CD4-positive, alpha-beta T cell (primary cell): ENCODE measurements at regions of chr1 and their contacts with region 1.

Region 1: DNA sequence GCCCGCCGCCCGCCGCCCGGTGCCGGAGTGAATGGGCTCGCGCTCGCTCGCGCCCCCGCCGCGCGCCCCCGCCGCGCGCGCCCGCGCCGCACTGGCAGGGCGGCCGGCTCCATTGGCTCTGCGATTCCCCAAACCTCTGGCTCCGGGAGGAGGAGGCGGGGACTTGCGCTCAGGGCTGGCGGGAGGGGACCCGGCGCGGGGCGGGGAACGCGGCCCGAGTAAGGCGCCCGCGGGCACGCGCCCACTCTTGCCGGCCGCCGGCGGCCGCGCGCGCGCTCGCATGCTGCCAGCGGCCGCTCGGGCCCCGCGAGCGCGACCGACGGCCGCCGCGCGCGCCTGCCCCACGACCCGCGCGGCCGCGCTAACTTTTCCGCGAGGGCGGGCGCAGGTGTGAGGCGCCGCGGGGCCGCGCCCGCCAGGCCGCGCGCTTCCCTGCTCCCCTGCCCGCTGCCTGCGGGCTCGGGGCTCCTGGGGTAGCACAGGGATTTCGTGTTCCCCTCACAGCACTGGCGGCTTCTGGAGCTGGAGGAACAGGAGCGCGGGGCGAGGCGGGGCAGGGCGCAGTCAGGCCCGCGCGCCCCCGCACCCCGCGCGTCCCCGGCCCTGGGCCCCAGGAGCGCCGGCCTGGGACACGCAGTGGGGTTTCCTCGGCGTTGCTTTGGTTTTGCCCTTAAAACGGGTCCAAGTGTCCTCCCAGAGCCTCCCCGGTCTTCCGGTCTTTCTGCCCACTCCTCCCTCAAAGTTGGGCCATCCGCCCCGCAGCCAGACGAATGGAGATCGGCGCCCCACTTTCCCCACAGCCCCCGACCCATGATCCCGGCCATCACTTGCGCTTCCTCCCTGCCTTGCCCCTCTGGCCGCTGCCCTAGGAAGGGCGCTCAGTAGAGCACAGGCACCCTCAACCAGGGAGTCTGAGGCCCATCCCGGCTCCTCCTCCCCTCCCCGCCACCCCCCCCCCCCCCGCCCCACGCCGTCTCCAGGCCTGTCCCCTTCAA is 101.5 kb downstream of the CASZ1 start:
- DNase-seq: peak in 13 of 14 experiments; percentile 41 to 93 (median 72)
- ATAC-seq: peak; percentile 70
- H3K4me3 ChIP-seq: peak overlapping the region; percentile 35
- H3K4me3 Mint-ChIP-seq: peak overlapping the region; percentile 95
- H3K27ac ChIP-seq: no peak overlapping the region
- H3K27ac Mint-ChIP-seq: peak overlapping the region; percentile 79
- H3K4me1 ChIP-seq: peaks cover 27% of the 10 kb centered on the region
- H3K4me1 Mint-ChIP-seq: peaks cover 19% of the 10 kb centered on the region
- H3K27me3 ChIP-seq: no peaks in the 10 kb centered on the region
- H3K27me3 Mint-ChIP-seq: no peaks in the 10 kb centered on the region
- CTCF ChIP-seq: no peak

Region 2: DNA sequence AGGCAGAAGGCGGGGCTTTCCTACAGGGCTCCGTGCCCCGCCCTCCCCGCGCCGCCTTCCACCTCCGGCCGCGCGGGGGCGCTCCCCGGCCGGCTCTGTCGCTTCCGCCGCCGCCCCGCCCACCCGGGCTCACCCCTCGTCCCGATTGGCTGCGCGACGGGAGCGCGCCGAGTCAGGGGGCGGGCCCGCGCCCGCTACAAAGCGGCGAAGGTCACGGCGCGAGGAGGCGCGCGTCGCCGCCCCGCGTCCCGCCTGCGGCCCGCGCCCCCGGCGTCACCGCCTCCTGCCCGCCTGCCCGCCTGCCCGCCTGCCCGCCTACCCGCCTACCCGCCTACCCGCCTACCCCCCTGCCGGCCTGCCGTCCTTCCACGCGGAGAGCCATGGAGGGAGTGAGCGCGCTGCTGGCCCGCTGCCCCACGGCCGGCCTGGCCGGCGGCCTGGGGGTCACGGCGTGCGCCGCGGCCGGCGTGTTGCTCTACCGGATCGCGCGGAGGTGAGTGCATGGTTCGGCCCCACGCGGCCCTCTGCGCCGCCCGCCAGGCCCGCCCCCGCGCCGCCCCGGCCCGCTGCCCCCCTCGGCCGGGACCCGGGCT is 1106.3 kb before region 1 on chr1 and contains the start of gene TMEM201:
- CTCF ChIA-PET with region 1: no interaction called
- POLR2A ChIA-PET with region 1: no interaction called
- intact Hi-C with region 1: loop called in 1 of 2 experiments (anchors 2 kb)
- DNase-seq: peak; percentile 87 to 98 (median 94)
- ATAC-seq: peak; percentile 91
- H3K4me3 ChIP-seq: peak within 1 kb of the TSS; percentile 66
- H3K4me3 Mint-ChIP-seq: peak within 1 kb of the TSS; percentile 92
- H3K27ac ChIP-seq: no peak within 1 kb of the TSS
- H3K27ac Mint-ChIP-seq: peak within 1 kb of the TSS; percentile 65
- H3K4me1 ChIP-seq: peaks cover 38% of the 10 kb centered on the region
- H3K4me1 Mint-ChIP-seq: peaks cover 33% of the 10 kb centered on the region
- H3K27me3 ChIP-seq: no peaks in the 10 kb centered on the region
- H3K27me3 Mint-ChIP-seq: no peaks in the 10 kb centered on the region
- CTCF ChIP-seq: peak; percentile 6
- total RNA-seq, gene TMEM201: 9.1 to 9.2 TPM

Region 3: DNA sequence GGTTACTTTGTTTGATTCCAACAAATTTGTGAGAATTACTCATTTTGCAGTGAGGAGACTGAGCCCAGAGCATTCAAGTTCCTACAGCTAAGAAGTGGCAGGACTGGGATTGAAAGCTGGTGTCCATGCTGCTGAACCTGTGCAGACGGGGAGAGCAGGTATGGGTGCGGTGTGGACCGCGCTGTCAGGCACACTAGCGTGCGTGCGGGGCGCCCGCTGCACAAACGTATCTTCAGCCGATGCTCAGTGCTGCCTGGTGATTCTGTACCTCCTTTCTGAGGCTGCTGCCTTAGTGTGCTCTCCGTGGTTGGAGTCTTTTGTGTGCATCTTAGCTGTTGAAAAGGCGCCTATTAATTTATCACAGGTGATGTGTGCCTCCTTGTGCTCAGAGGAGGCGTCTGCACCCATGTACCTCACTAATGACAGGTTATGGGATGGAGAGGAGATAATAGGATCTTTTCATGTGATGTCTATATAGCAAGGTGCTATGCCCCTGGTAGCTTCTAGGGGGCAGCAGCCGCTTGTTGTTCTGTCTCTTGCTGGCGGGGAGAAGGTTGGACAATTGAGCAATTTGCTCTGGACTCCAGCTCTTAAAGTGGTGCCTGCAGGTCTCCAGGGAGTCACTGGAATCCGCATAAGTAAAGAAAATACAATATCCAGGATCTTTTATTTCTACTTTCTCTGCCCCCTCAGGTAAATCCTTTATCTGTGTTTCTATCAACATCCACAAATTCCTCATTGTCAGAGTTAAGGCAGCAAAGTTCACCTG is 187.6 kb before region 1 on chr1:
- CTCF ChIA-PET with region 1: interaction called, 4 read pairs
- POLR2A ChIA-PET with region 1: interaction called, 3 read pairs
- intact Hi-C with region 1: loop called in 1 of 2 experiments (anchors 5 kb)
- DNase-seq: peak; percentile 37 to 76 (median 50)
- ATAC-seq: peak; percentile 76
- H3K4me3 ChIP-seq: no peak overlapping the region
- H3K4me3 Mint-ChIP-seq: peak overlapping the region; percentile 0
- H3K27ac ChIP-seq: no peak overlapping the region
- H3K27ac Mint-ChIP-seq: peak overlapping the region; percentile 64
- H3K4me1 ChIP-seq: peaks cover 43% of the 10 kb centered on the region
- H3K4me1 Mint-ChIP-seq: peaks cover 58% of the 10 kb centered on the region
- H3K27me3 ChIP-seq: no peaks in the 10 kb centered on the region
- H3K27me3 Mint-ChIP-seq: no peaks in the 10 kb centered on the region
- CTCF ChIP-seq: peak; percentile 79

Region 4: GRCh38 chr1:10803971-10804820 is 109.3 kb after region 1 on chr1:
- CTCF ChIA-PET with region 1: no interaction called
- POLR2A ChIA-PET with region 1: no interaction called
- intact Hi-C with region 1: no loop called
- DNase-seq: peak in 2 of 14 experiments; percentile 5 to 12
- ATAC-seq: no peak
- H3K4me3 ChIP-seq: no peak overlapping the region
- H3K4me3 Mint-ChIP-seq: no peak overlapping the region
- H3K27ac ChIP-seq: no peak overlapping the region
- H3K27ac Mint-ChIP-seq: no peak overlapping the region
- H3K4me1 ChIP-seq: peaks cover 11% of the 10 kb centered on the region
- H3K4me1 Mint-ChIP-seq: no peaks in the 10 kb centered on the region
- H3K27me3 ChIP-seq: peaks cover 6 to 15% of the 10 kb centered on the region in 2 experiments
- H3K27me3 Mint-ChIP-seq: peaks cover 79% of the 10 kb centered on the region
- CTCF ChIP-seq: no peak

Region 5: DNA sequence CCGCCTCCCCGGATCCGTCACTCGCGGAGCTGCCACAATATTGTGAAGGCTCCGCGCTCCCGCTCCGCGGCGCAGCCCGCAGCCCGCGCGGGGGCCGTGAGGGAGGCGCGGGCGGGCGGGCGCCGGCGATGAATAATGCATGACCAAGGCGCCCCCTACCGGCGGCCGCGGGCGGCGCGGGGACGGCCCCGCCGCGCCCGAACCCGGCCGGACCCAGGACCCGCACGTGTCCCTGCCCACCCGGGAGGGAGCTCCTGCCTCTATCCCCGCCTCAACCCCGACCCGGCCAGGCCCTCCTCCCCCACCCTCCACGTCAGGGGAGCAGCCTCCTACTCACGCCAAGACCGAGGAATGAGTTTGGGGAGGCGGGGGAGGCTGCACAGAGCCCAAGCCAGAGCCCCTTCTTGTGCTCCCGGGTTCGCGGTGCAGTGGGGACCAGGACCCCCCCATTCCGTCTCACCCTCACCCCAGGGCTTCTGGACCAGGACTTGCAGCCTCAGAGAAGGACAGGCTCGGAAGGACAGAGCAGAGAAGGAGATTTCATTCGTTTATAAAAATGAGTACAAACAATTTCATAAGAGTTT is 172.3 kb after region 1 on chr1:
- CTCF ChIA-PET with region 1: no interaction called
- POLR2A ChIA-PET with region 1: no interaction called
- intact Hi-C with region 1: loop called (anchors 2 kb)
- DNase-seq: peak; percentile 39 to 82 (median 59)
- ATAC-seq: peak; percentile 85
- H3K4me3 ChIP-seq: peak overlapping the region; percentile 29
- H3K4me3 Mint-ChIP-seq: peak overlapping the region; percentile 6
- H3K27ac ChIP-seq: no peak overlapping the region
- H3K27ac Mint-ChIP-seq: no peak overlapping the region
- H3K4me1 ChIP-seq: peaks cover 16% of the 10 kb centered on the region
- H3K4me1 Mint-ChIP-seq: peaks cover 25% of the 10 kb centered on the region
- H3K27me3 ChIP-seq: peaks cover 40 to 41% of the 10 kb centered on the region in 2 experiments
- H3K27me3 Mint-ChIP-seq: peaks cover 71% of the 10 kb centered on the region
- CTCF ChIP-seq: peak; percentile 48

Region 6: GRCh38 chr1:10909697-10910671 is 215.1 kb after region 1 on chr1:
- CTCF ChIA-PET with region 1: no interaction called
- POLR2A ChIA-PET with region 1: no interaction called
- intact Hi-C with region 1: loop called in 1 of 2 experiments (anchors 2 kb)
- DNase-seq: peak; percentile 63 to 81 (median 73)
- ATAC-seq: peak; percentile 91
- H3K4me3 ChIP-seq: no peak overlapping the region
- H3K4me3 Mint-ChIP-seq: no peak overlapping the region
- H3K27ac ChIP-seq: no peak overlapping the region
- H3K27ac Mint-ChIP-seq: no peak overlapping the region
- H3K4me1 ChIP-seq: peaks cover 24% of the 10 kb centered on the region
- H3K4me1 Mint-ChIP-seq: peaks cover 19% of the 10 kb centered on the region
- H3K27me3 ChIP-seq: no peaks in the 10 kb centered on the region
- H3K27me3 Mint-ChIP-seq: peaks cover 5% of the 10 kb centered on the region
- CTCF ChIP-seq: peak; percentile 71

Region 7: GRCh38 chr1:10941891-10942541 is 247.1 kb after region 1 on chr1:
- CTCF ChIA-PET with region 1: interaction called, 3 read pairs
- POLR2A ChIA-PET with region 1: no interaction called
- intact Hi-C with region 1: loop called (anchors 2 to 5 kb)
- DNase-seq: peak; percentile 38 to 78 (median 56)
- ATAC-seq: peak; percentile 71
- H3K4me3 ChIP-seq: no peak overlapping the region
- H3K4me3 Mint-ChIP-seq: peak overlapping the region; percentile 20
- H3K27ac ChIP-seq: no peak overlapping the region
- H3K27ac Mint-ChIP-seq: no peak overlapping the region
- H3K4me1 ChIP-seq: peaks cover 42% of the 10 kb centered on the region
- H3K4me1 Mint-ChIP-seq: peaks cover 34% of the 10 kb centered on the region
- H3K27me3 ChIP-seq: peaks cover 8 to 14% of the 10 kb centered on the region in 2 experiments
- H3K27me3 Mint-ChIP-seq: peaks cover 53% of the 10 kb centered on the region
- CTCF ChIP-seq: peak; percentile 91

Region 8: GRCh38 chr1:11012250-11013171 is 317.6 kb after region 1 on chr1 and contains the start of gene TARDBP:
- CTCF ChIA-PET with region 1: no interaction called
- POLR2A ChIA-PET with region 1: no interaction called
- intact Hi-C with region 1: loop called in 1 of 2 experiments (anchors 5 kb)
- DNase-seq: peak; percentile 80 to 95 (median 88)
- ATAC-seq: peak; percentile 85
- H3K4me3 ChIP-seq: peak within 1 kb of the TSS; percentile 85
- H3K4me3 Mint-ChIP-seq: peak within 1 kb of the TSS; percentile 94
- H3K27ac ChIP-seq: peak within 1 kb of the TSS; percentile 91 to 99
- H3K27ac Mint-ChIP-seq: peak within 1 kb of the TSS; percentile 98
- H3K4me1 ChIP-seq: peaks cover 44% of the 10 kb centered on the region
- H3K4me1 Mint-ChIP-seq: peaks cover 34% of the 10 kb centered on the region
- H3K27me3 ChIP-seq: no peaks in the 10 kb centered on the region
- H3K27me3 Mint-ChIP-seq: no peaks in the 10 kb centered on the region
- CTCF ChIP-seq: no peak
- total RNA-seq, gene TARDBP: 141 to 149 TPM